ENCODE measurements at regions of chr17 and their contacts with region 1.

Region 1: DNA sequence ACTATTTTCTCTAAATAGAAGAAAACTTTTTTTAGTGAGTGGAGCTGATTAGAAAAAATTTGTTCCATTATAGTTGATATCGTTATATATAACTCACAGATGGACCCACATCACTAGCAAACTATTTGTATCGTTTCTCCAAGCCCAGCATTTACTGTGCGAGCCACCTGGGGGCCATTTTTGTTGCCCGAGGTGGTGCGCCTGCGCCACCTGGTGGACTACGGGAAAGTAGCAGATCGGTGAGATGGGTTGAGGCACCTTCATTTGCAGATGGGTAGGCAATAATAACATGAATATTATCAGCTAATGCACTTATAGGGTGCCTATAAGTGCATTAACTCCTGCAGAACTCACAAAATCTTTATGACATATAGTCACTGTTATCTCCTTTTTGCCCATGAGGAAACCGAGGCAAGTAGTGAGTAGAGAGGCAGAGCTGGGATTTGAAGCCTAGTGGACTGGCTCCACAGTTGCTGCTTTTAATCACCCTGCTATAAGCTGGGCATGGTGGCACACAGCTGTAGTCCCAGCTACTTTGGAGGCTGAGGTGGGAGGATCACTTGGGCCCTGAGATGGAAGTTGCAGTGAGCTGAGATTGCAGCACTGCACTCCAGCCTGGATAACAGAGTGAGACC is 23.2 kb upstream of the NTN1 start:
- DNase-seq: peak; percentile 64 to 90 (median 76)
- ATAC-seq: peak; percentile 91
- H3K4me3 ChIP-seq: no peak overlapping the region
- H3K4me3 Mint-ChIP-seq: no peak overlapping the region
- H3K27ac ChIP-seq: no peak overlapping the region
- H3K27ac Mint-ChIP-seq: no peak overlapping the region
- H3K4me1 ChIP-seq: peaks cover 13% of the 10 kb centered on the region
- H3K4me1 Mint-ChIP-seq: peaks cover 13% of the 10 kb centered on the region
- H3K27me3 ChIP-seq: peaks cover 18 to 21% of the 10 kb centered on the region in 2 experiments
- H3K27me3 Mint-ChIP-seq: peaks cover 39% of the 10 kb centered on the region
- CTCF ChIP-seq: peak; percentile 98

Region 2: DNA sequence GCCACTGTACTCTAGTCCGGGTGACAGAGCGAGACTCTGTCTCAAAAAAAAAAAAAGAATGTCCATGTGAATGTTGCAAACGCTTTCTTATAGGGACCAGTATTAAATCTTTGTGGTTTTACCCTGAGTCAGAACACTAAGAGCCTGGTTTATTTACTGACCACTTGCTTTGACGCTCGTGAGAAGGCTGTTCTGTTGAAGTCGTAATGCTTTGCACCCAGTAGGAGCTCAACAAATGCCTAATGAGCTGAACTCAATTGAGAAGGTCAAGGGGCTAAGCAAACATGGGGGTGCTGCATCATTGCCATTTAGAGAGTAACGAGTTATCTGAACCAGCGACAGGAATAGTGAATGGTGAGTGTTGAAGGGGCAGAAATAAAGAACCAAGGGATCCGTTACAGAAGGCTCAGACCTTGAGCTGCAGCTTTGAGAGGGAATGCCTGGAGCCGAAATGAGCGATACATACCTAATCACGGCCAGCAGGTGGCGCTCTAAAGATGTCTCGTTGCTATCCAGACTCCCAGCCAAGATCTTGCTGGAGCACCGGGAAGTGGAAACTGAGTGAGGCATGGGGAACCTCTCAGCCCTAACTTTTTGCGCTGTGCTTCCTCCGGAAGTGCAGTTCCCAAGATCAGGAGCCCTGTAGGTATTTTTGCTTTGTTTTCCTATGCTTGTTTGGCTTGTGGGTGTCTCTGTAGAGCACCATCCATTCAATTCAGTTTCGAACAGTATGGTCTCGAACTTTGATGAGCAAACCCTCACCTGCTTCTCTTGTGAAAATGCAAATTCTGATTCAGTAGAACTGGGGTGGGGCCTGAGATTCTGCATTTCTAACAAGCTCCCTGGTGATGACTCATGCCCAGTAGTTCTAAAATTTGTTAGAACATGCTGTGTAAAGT is 587.9 kb before region 1 on chr17:
- CTCF ChIA-PET with region 1: no interaction called
- POLR2A ChIA-PET with region 1: no interaction called
- intact Hi-C with region 1: loop called (anchors 2 kb)
- DNase-seq: peak; percentile 65 to 91 (median 75)
- ATAC-seq: peak; percentile 85
- H3K4me3 ChIP-seq: no peak overlapping the region
- H3K4me3 Mint-ChIP-seq: no peak overlapping the region
- H3K27ac ChIP-seq: no peak overlapping the region
- H3K27ac Mint-ChIP-seq: no peak overlapping the region
- H3K4me1 ChIP-seq: peaks cover 16% of the 10 kb centered on the region
- H3K4me1 Mint-ChIP-seq: peaks cover 10% of the 10 kb centered on the region
- H3K27me3 ChIP-seq: peaks cover 0 to 7% of the 10 kb centered on the region in 2 experiments
- H3K27me3 Mint-ChIP-seq: peaks cover 9% of the 10 kb centered on the region
- CTCF ChIP-seq: peak; percentile 96

Region 3: GRCh38 chr17:8785547-8786413 is 212.3 kb before region 1 on chr17:
- CTCF ChIA-PET with region 1: interaction called, 5 read pairs
- POLR2A ChIA-PET with region 1: no interaction called
- intact Hi-C with region 1: loop called (anchors 5 to 10 kb)
- DNase-seq: peak; percentile 35 to 73 (median 55)
- ATAC-seq: peak; percentile 44
- H3K4me3 ChIP-seq: no peak overlapping the region
- H3K4me3 Mint-ChIP-seq: no peak overlapping the region
- H3K27ac ChIP-seq: no peak overlapping the region
- H3K27ac Mint-ChIP-seq: no peak overlapping the region
- H3K4me1 ChIP-seq: peaks cover 6% of the 10 kb centered on the region
- H3K4me1 Mint-ChIP-seq: no peaks in the 10 kb centered on the region
- H3K27me3 ChIP-seq: no peaks in the 10 kb centered on the region
- H3K27me3 Mint-ChIP-seq: no peaks in the 10 kb centered on the region
- CTCF ChIP-seq: peak; percentile 73

Region 4: DNA sequence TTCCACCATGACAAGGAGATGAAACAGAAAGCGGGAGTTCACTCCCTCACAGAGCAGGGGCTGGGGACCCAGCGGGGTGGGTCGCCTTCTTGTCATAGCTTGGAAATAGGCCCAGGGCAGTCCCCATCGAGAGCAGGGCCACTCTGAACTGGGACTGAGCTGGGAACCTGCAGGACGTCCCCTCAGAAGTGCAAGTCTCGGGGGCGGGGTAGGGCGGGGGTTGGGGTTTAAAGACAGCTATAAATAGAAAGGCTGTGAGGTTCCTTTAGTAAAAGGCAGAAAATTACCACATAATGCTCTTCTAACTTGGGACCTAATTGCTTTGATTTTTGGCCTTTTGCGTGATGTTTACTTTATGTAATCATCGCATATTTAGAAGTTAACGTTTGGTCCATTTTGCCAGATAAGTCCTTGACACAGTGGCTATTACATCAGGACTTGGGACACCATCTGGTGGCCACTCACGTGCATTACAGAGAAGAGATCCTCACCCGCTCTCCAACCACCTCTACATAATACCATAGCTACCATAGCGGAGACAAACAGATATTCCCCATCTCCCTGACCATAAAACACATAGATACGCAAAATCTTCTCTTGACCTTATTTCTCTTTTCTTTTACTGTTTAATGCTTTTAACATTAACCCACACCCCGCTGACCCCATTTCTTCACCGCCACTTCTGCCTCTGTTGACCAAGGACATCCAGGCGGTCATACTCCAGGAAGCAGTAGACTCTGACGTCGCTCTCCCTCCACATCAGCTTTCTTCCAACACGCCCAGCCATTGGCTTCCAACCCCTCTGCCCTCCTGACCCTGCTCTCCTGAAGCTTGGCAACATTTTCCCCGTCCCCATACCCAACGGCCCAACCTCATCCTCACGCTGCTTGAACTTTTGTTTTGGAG is 103.2 kb before region 1 on chr17:
- CTCF ChIA-PET with region 1: interaction called, 16 read pairs
- POLR2A ChIA-PET with region 1: interaction called, 3 read pairs
- intact Hi-C with region 1: loop called (anchors 1 to 2 kb)
- DNase-seq: peak in 12 of 14 experiments; percentile 23 to 79 (median 42)
- ATAC-seq: peak; percentile 20
- H3K4me3 ChIP-seq: no peak overlapping the region
- H3K4me3 Mint-ChIP-seq: peak overlapping the region; percentile 1
- H3K27ac ChIP-seq: no peak overlapping the region
- H3K27ac Mint-ChIP-seq: peak overlapping the region; percentile 93
- H3K4me1 ChIP-seq: peaks cover 61% of the 10 kb centered on the region
- H3K4me1 Mint-ChIP-seq: peaks cover 58% of the 10 kb centered on the region
- H3K27me3 ChIP-seq: no peaks in the 10 kb centered on the region
- H3K27me3 Mint-ChIP-seq: no peaks in the 10 kb centered on the region
- CTCF ChIP-seq: peak; percentile 77

Region 5: DNA sequence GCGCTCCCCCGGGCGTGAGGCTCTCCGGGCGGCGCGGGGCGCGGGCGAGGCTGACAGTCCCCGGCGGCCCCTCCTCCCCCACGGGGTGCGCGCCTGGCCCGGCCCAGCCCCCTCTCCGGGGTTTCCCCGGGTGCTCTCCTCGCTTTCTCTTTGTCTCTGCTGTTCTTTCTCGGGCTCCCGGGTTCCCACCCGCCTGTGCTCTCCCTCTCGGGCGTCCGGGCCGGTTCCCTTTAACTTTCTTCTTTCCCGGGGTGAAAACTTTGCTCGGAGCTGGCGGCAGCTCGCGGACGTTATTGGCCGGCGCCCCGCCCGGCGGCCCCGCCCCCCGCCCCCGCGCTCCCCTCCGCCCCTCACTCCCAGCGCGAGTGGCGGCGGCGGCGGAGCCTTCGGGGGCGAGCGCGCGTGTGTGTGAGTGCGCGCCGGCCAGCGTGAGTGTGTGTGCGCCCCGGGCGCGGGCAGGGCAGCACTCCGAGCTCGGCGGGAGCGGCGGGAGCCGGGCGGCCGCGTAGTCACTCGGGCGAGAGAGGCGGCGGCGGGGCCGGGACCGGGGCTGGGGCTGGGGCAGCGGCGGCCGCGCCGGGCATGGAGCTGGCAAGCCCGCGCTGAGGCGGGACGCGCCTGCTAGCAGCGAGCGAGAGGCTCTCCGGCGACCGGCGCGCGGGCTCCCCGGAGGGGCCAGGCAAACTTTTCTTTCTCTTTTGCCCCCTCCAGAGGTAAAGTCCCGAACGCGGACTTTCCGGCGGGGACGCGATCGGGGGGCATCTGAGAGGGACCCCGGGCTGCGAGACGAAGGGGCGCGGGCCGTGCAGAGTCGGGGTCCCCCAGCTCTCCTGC is 23.3 kb after region 1 on chr17 and contains the start of gene NTN1:
- CTCF ChIA-PET with region 1: no interaction called
- POLR2A ChIA-PET with region 1: no interaction called
- intact Hi-C with region 1: no loop called
- DNase-seq: peak in 13 of 14 experiments; percentile 25 to 80 (median 38)
- ATAC-seq: peak; percentile 84
- H3K4me3 ChIP-seq: peak within 1 kb of the TSS; percentile 51
- H3K4me3 Mint-ChIP-seq: peak within 1 kb of the TSS; percentile 74
- H3K27ac ChIP-seq: no peak within 1 kb of the TSS
- H3K27ac Mint-ChIP-seq: no peak within 1 kb of the TSS
- H3K4me1 ChIP-seq: peaks cover 26% of the 10 kb centered on the region
- H3K4me1 Mint-ChIP-seq: peaks cover 20% of the 10 kb centered on the region
- H3K27me3 ChIP-seq: peaks cover 52 to 80% of the 10 kb centered on the region in 2 experiments
- H3K27me3 Mint-ChIP-seq: peaks cover 58% of the 10 kb centered on the region
- CTCF ChIP-seq: no peak
- total RNA-seq, gene NTN1: 0.08 to 0.14 TPM

Region 6: GRCh38 chr17:9291912-9292560 is 293.9 kb after region 1 on chr17:
- CTCF ChIA-PET with region 1: no interaction called
- POLR2A ChIA-PET with region 1: no interaction called
- intact Hi-C with region 1: loop called in 1 of 2 experiments (anchors 5 kb)
- DNase-seq: peak in 12 of 14 experiments; percentile 2 to 55 (median 19)
- ATAC-seq: peak; percentile 83
- H3K4me3 ChIP-seq: no peak overlapping the region
- H3K4me3 Mint-ChIP-seq: no peak overlapping the region
- H3K27ac ChIP-seq: no peak overlapping the region
- H3K27ac Mint-ChIP-seq: no peak overlapping the region
- H3K4me1 ChIP-seq: peaks cover 5% of the 10 kb centered on the region
- H3K4me1 Mint-ChIP-seq: peaks cover 36% of the 10 kb centered on the region
- H3K27me3 ChIP-seq: no peaks in the 10 kb centered on the region
- H3K27me3 Mint-ChIP-seq: no peaks in the 10 kb centered on the region
- CTCF ChIP-seq: peak; percentile 73

Measured in CD4-positive, alpha-beta T cell (primary cell).